Posterior vena cava (tissue), 2 donors: ENCODE measurements at regions of chr17 and their contacts with region 1.

Region 1: GRCh38 chr17:14276535-14277250 is 24.2 kb upstream of the HS3ST3B1 start:
- DNase-seq: no peak

Region 2: GRCh38 chr17:14337596-14338079 is 60.9 kb after region 1 on chr17:
- intact Hi-C with region 1: loop called in 1 of 2 experiments (anchors 10 kb)
- DNase-seq: no peak